Adrenal gland (tissue), 19 donors: ENCODE measurements at regions of chr2 and their contacts with region 1.

Region 1: GRCh38 chr2:27489498-27490397 is at the start of gene IFT172:
- DNase-seq: peak; percentile 99 to 100 (median 100)
- H3K4me3 ChIP-seq: peak within 1 kb of the TSS in 3 of 4 donors; percentile 44 to 68 (median 64)
- H3K27ac ChIP-seq: peak within 1 kb of the TSS; percentile 62 to 96 (median 89)
- H3K4me1 ChIP-seq: peaks cover 11 to 23% of the 10 kb centered on the region in 2 donors
- H3K27me3 ChIP-seq: no peaks in the 10 kb centered on the region
- CTCF ChIP-seq: no peak
- POLR2A ChIP-seq: peak; percentile 80 to 94
- total RNA-seq, gene IFT172: 6.3 to 28.1 (median 15.7) TPM

Region 2: GRCh38 chr2:27638037-27638637 is 148.4 kb after region 1 on chr2:
- intact Hi-C with region 1: loop called in 1 of 2 experiments (anchors 10 kb)
- DNase-seq: no peak
- H3K4me3 ChIP-seq: no peak overlapping the region
- H3K27ac ChIP-seq: no peak overlapping the region
- H3K4me1 ChIP-seq: no peaks in the 10 kb centered on the region
- H3K27me3 ChIP-seq: no peaks in the 10 kb centered on the region
- CTCF ChIP-seq: no peak
- POLR2A ChIP-seq: no peak